Aorta (tissue), 5 donors: ENCODE measurements at regions of chr9 and their contacts with region 1.

Region 1: DNA sequence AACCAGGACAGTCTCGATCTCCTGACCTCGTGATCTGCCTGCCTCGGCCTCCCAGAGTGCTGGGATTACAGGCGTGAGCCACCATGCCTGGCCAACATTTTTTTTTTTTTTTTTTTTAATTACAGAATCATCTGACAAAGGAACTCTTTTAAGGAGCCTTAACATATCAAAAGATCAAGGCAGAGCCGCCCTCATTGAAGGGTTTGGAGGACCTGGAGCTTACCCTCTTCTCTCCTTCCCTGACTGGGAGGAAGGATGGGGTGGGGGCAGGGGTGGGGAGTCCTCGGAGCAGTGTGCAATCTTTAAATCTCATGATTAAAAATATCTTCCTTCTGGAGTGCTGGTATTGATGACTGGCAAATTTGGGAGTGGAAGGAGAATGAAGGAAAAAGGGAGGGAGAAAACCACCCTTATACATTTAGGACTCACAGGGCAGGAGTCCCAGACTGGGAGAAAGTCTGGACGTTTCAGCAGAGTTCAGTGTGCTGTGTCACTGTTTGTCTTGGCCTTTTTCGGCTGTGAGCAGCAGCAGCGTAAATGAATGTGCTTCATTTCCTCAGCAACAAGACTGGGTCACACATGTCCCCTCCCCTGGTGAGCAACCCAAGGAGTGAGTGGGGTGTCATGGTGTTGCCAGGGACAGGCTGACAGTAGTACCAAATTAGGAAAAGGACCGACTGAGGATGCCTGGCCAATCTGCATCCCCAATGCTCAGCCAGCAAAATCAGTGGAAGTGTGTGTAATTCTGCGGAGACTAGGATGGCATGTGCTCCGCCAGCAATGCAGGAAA is 115.3 kb upstream of the BNC2 start:
- DNase-seq: peak; percentile 86 to 89
- ATAC-seq: peak; percentile 92
- H3K4me3 ChIP-seq: no peak overlapping the region
- H3K27ac ChIP-seq: peak overlapping the region; percentile 39 to 95
- H3K4me1 ChIP-seq: peaks cover 0 to 3% of the 10 kb centered on the region in 2 donors
- H3K27me3 ChIP-seq: no peaks in the 10 kb centered on the region

Region 2: GRCh38 chr9:16871356-16872151 is 114.2 kb before region 1 on chr9:
- intact Hi-C with region 1: loop called in 1 of 2 experiments (anchors 5 kb)
- DNase-seq: peak; percentile 84 to 86
- ATAC-seq: peak; percentile 73
- H3K4me3 ChIP-seq: peak overlapping the region; percentile 73
- H3K27ac ChIP-seq: peak overlapping the region in 1 of 2 donors; percentile 30
- H3K4me1 ChIP-seq: no peaks in the 10 kb centered on the region
- H3K27me3 ChIP-seq: no peaks in the 10 kb centered on the region

Region 3: DNA sequence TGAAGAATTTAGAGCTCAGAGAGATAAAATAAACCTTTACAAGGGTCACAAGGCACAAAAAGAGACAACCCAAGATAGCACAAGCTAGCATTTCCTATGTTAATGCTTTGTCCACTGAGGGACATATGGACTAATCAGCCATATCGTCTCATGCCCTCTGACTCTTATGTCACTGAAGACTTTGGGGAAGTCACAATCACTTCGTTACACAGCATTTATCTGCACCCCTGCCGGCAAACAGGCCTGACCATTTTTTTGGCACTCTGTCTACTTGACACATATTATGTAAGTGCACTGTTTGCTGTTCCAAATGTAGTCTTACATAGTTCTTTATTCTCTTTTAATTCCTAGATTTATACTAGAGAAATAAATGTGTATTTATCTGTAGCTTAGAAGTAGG is 101.4 kb before region 1 on chr9:
- intact Hi-C with region 1: no loop called
- DNase-seq: no peak
- ATAC-seq: peak; percentile 26
- H3K4me3 ChIP-seq: no peak overlapping the region
- H3K27ac ChIP-seq: no peak overlapping the region
- H3K4me1 ChIP-seq: no peaks in the 10 kb centered on the region
- H3K27me3 ChIP-seq: no peaks in the 10 kb centered on the region